CD4-positive, alpha-beta memory T cell (primary cell): ENCODE measurements at regions of chr1 and their contacts with region 1.

Region 1: GRCh38 chr1:48697066-48697707 is 79.5 kb downstream of the BEND5 start:
- DNase-seq: peak in 2 of 5 donors; percentile 7
- H3K4me3 ChIP-seq: no peak overlapping the region
- H3K4me3 Mint-ChIP-seq: no peak overlapping the region
- H3K27ac ChIP-seq: no peak overlapping the region
- H3K27ac Mint-ChIP-seq: no peak overlapping the region
- H3K4me1 ChIP-seq: no peaks in the 10 kb centered on the region
- H3K4me1 Mint-ChIP-seq: no peaks in the 10 kb centered on the region
- H3K27me3 ChIP-seq: no peaks in the 10 kb centered on the region
- H3K27me3 Mint-ChIP-seq: peaks cover 6 to 7% of the 10 kb centered on the region in 2 donors

Region 2: GRCh38 chr1:48109390-48110013 is 587.7 kb before region 1 on chr1:
- CTCF ChIA-PET with region 1: no interaction called
- POLR2A ChIA-PET with region 1: no interaction called
- intact Hi-C with region 1: loop called (anchors 5 kb)
- DNase-seq: peak in 2 of 5 donors; percentile 5 to 10
- H3K4me3 ChIP-seq: no peak overlapping the region
- H3K4me3 Mint-ChIP-seq: no peak overlapping the region
- H3K27ac ChIP-seq: no peak overlapping the region
- H3K27ac Mint-ChIP-seq: no peak overlapping the region
- H3K4me1 ChIP-seq: no peaks in the 10 kb centered on the region
- H3K4me1 Mint-ChIP-seq: no peaks in the 10 kb centered on the region
- H3K27me3 ChIP-seq: no peaks in the 10 kb centered on the region
- H3K27me3 Mint-ChIP-seq: peaks cover 1 to 8% of the 10 kb centered on the region in 2 donors

Region 3: GRCh38 chr1:48498096-48498791 is 198.9 kb before region 1 on chr1:
- CTCF ChIA-PET with region 1: no interaction called
- POLR2A ChIA-PET with region 1: no interaction called
- intact Hi-C with region 1: no loop called
- DNase-seq: peak; percentile 39 to 44 (median 39)
- H3K4me3 ChIP-seq: no peak overlapping the region
- H3K4me3 Mint-ChIP-seq: peak overlapping the region in 1 of 8 donors; percentile 70
- H3K27ac ChIP-seq: no peak overlapping the region
- H3K27ac Mint-ChIP-seq: peak overlapping the region in 1 of 7 donors; percentile 32
- H3K4me1 ChIP-seq: no peaks in the 10 kb centered on the region
- H3K4me1 Mint-ChIP-seq: peaks cover 0 to 7% (median under 1%) of the 10 kb centered on the region in 4 donors
- H3K27me3 ChIP-seq: no peaks in the 10 kb centered on the region
- H3K27me3 Mint-ChIP-seq: peaks cover 2 to 3% of the 10 kb centered on the region in 2 donors